MCF 10A (cell line): ENCODE measurements at regions of chr18 and their contacts with region 1.

Region 1: GRCh38 chr18:27762054-27762453 is 414.9 kb downstream of the CDH2 start:
- DNase-seq: no peak
- H3K4me3 Mint-ChIP-seq: no peak overlapping the region
- H3K27ac Mint-ChIP-seq: no peak overlapping the region
- H3K4me1 Mint-ChIP-seq: no peaks in the 10 kb centered on the region
- H3K27me3 Mint-ChIP-seq: no peaks in the 10 kb centered on the region
- CTCF ChIP-seq: no peak

Region 2: GRCh38 chr18:27824841-27825681 is 63.0 kb after region 1 on chr18:
- CTCF ChIA-PET with region 1: no interaction called
- POLR2A ChIA-PET with region 1: no interaction called
- intact Hi-C with region 1: loop called (anchors 5 kb)
- DNase-seq: no peak
- H3K4me3 Mint-ChIP-seq: no peak overlapping the region
- H3K27ac Mint-ChIP-seq: no peak overlapping the region
- H3K4me1 Mint-ChIP-seq: no peaks in the 10 kb centered on the region
- H3K27me3 Mint-ChIP-seq: no peaks in the 10 kb centered on the region
- CTCF ChIP-seq: no peak